ENCODE measurements at regions of chr11 and their contacts with region 1.

Region 1: GRCh38 chr11:112588252-112588694 is 327.6 kb upstream of the PLET1 start:
- DNase-seq: peak; percentile 46
- ATAC-seq: peak; percentile 93
- H3K4me3 ChIP-seq: no peak overlapping the region
- H3K27ac ChIP-seq: no peak overlapping the region
- H3K4me1 ChIP-seq: no peaks in the 10 kb centered on the region
- H3K27me3 ChIP-seq: 0 out of 2 replicates have a peak, but pooled peaks cover 3% of the 10 kb centered on the region
- CTCF ChIP-seq: peak; percentile 84

Region 2: DNA sequence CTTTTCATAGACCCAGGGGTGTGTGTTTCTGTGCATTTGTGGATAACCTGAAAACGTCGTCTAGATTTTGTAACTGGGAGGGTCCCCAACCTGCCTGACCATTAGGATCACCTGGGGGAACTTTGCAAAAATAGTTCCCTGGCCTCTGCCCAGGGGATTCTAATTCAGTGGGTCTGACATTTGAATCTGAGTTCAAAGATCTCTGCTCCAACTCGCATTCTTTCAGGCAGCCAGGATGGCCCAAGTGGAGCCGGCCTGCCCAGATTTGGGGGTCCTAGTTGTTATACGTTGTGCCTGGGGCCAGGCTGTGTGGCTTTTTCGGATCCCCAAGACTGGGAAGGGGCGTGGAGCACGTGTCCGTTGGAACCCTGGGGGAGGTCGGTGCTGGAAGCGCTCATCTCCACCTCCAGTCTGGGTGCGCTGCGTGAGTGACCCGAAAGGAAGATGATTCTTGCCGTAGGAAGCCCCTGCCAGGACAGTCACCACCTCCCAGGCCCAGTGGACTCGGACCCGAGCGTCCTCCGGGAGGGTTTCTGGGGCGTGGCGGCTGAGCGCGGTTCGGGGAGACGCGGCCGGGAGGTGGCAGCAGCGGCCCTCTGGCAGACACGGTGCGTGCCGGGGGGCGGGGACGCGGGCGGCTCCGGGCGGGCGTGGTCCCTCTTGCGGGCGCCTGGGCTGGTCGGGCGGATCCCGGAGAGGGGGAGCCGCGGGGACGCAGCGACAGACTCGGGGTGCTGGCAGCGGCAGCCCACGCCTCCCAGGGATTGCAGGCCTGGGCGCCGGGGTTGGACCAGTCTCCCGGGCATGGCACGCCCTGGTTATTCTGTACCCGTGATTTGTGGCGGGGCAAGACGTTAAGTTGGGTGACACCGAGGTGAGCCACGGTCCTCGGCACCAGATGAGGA is 298.4 kb before region 1 on chr11:
- CTCF ChIA-PET with region 1: no interaction called
- POLR2A ChIA-PET with region 1: no interaction called
- in situ Hi-C with region 1: no loop called
- intact Hi-C with region 1: loop called (anchors 5 kb)
- DNase-seq: no peak
- ATAC-seq: peak; percentile 98
- H3K4me3 ChIP-seq: peak overlapping the region; percentile 59 to 61
- H3K27ac ChIP-seq: peak overlapping the region; percentile 75
- H3K4me1 ChIP-seq: peaks cover 8% of the 10 kb centered on the region
- H3K27me3 ChIP-seq: 0 out of 2 replicates have a peak, but pooled peaks cover 2% of the 10 kb centered on the region
- CTCF ChIP-seq: peak; percentile 99

Region 3: DNA sequence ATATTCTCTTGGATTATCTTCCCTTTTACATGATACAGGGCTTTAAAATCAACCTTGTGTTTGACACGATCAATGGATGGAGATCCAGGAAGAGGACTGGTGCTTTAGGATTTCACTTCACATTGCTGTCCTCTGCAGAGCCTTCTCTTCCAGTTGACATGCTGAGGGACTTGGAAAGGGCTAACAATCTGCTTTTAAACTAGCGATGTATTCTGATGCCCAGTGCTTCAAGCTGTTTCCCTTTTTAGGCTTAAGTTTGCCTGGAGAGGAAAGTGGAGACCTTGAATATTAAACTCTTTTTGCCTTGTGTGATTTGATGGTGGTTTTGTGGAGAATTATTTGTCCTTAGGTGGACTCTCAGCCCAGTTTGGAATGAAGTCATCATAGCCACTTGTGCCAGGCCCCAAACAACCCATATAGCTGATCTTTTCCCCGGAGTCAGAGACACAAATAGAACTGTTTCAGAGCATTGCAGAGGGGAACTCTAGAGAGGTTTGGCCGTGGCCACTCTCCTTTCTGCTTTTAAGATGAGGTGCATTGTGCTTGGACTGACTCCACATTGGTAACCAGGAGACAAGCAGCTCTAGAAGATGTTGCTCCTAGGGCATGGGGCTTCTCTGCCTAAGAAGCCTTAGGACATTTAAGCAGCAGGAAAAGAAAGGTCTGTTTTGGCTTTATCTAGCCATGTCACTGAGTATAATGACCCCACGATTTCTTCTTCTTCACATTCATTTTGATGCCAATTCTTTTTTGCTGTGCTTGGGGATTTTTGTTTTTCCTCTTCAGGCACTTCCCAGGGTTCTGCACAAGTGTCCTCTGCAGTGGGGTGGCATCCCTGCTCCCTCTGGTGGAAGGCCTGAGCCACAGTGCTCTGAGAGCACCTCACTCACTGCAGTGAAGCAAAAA is 525.8 kb after region 1 on chr11:
- CTCF ChIA-PET with region 1: no interaction called
- POLR2A ChIA-PET with region 1: no interaction called
- in situ Hi-C with region 1: no loop called
- intact Hi-C with region 1: loop called (anchors 10 kb)
- DNase-seq: peak; percentile 24
- ATAC-seq: peak; percentile 95
- H3K4me3 ChIP-seq: no peak overlapping the region
- H3K27ac ChIP-seq: no peak overlapping the region
- H3K4me1 ChIP-seq: no peaks in the 10 kb centered on the region
- H3K27me3 ChIP-seq: peaks cover 13% of the 10 kb centered on the region
- CTCF ChIP-seq: peak; percentile 78

Region 4: DNA sequence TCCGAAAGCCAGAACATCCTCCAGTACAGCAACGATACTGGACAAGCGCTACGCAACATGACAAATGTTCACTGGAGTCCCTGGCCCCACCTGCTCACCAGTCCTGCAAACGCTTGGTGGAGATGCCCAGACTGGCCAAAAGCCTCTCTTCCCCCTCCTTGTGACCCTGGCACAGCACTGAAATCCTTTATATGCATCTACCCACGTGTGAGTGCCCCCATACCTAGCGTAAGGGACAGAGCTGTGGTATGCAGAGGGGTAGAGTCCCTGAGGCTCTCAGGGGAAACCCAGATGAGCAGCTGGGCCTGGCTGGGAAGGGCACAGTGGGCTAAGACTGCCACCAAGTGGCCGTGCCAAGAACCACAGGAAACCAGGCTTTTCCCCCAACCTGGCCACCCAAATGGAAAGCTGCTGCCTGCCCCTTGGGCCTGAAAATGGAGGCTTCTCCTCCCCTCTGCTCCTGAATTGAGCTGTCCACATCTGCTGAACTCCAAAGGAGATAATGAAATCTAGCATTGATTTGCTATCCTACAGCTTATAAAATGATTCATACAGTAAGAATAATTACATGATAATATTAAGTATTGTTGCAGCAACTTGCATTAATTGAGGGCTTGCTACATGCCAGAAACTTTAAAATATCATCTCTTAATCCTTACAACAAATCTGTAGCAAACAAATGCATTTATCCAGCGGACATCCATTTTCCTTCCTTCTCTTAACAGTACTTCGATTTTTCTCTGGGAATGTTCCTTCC is 701.3 kb after region 1 on chr11:
- CTCF ChIA-PET with region 1: interaction called, 11 read pairs
- POLR2A ChIA-PET with region 1: no interaction called
- in situ Hi-C with region 1: no loop called
- intact Hi-C with region 1: loop called (anchors 2 kb)
- DNase-seq: peak; percentile 53
- ATAC-seq: peak; percentile 89
- H3K4me3 ChIP-seq: no peak overlapping the region
- H3K27ac ChIP-seq: no peak overlapping the region
- H3K4me1 ChIP-seq: no peaks in the 10 kb centered on the region
- H3K27me3 ChIP-seq: no peaks in the 10 kb centered on the region; the same call in 1 of the 2 replicates
- CTCF ChIP-seq: peak; percentile 96

Measured in Panc1 (cell line).